T-cell (primary cell): ENCODE measurements at regions of chr10 and their contacts with region 1.

Region 1: GRCh38 chr10:69123747-69124562 is at the start of gene VPS26A:
- DNase-seq: peak; percentile 96 to 99 (median 98)
- ATAC-seq: peak; percentile 91 to 97 (median 94)
- H3K4me3 ChIP-seq: peak within 1 kb of the TSS; percentile 81 to 85
- H3K4me3 Mint-ChIP-seq: peak within 1 kb of the TSS; percentile 92 to 95 (median 92)
- H3K27ac ChIP-seq: peak within 1 kb of the TSS; percentile 96
- H3K27ac Mint-ChIP-seq: peak within 1 kb of the TSS; percentile 96 to 98
- H3K4me1 ChIP-seq: peaks cover 15 to 37% of the 10 kb centered on the region in 2 experiments
- H3K4me1 Mint-ChIP-seq: peaks cover 18 to 33% (median 32%) of the 10 kb centered on the region in 3 donors
- H3K27me3 ChIP-seq: no peaks in the 10 kb centered on the region
- H3K27me3 Mint-ChIP-seq: no peaks in the 10 kb centered on the region
- total RNA-seq, gene VPS26A: 24.6 to 35.8 (median 28.2) TPM

Region 2: GRCh38 chr10:68684413-68684812 is 439.5 kb before region 1 on chr10:
- CTCF ChIA-PET with region 1: no interaction called
- POLR2A ChIA-PET with region 1: no interaction called
- DNase-seq: peak in 3 of 35 experiments; percentile 3 to 50 (median 3)
- ATAC-seq: peak in 1 of 4 experiments; percentile 40
- H3K4me3 ChIP-seq: peak overlapping the region in 1 of 2 donors; percentile 22
- H3K4me3 Mint-ChIP-seq: peak overlapping the region in 2 of 3 donors; percentile 51 to 53
- H3K27ac ChIP-seq: peak overlapping the region; percentile 31
- H3K27ac Mint-ChIP-seq: peak overlapping the region; percentile 16 to 61
- H3K4me1 ChIP-seq: no peaks in the 10 kb centered on the region
- H3K4me1 Mint-ChIP-seq: peaks cover 0 to 2% (median 2%) of the 10 kb centered on the region in 3 donors
- H3K27me3 ChIP-seq: no peaks in the 10 kb centered on the region
- H3K27me3 Mint-ChIP-seq: no peaks in the 10 kb centered on the region

Region 3: GRCh38 chr10:69004821-69005220 is 119.1 kb before region 1 on chr10:
- CTCF ChIA-PET with region 1: interaction called, 5 to 13 read pairs
- POLR2A ChIA-PET with region 1: interaction called, 3 to 6 read pairs
- DNase-seq: peak in 3 of 35 experiments; percentile 16 to 68 (median 26)
- ATAC-seq: peak; percentile 59 to 73 (median 60)
- H3K4me3 ChIP-seq: no peak overlapping the region
- H3K4me3 Mint-ChIP-seq: no peak overlapping the region
- H3K27ac ChIP-seq: no peak overlapping the region
- H3K27ac Mint-ChIP-seq: no peak overlapping the region
- H3K4me1 ChIP-seq: no peaks in the 10 kb centered on the region
- H3K4me1 Mint-ChIP-seq: peaks cover 0 to 3% (median 2%) of the 10 kb centered on the region in 3 donors
- H3K27me3 ChIP-seq: no peaks in the 10 kb centered on the region
- H3K27me3 Mint-ChIP-seq: no peaks in the 10 kb centered on the region

Region 4: DNA sequence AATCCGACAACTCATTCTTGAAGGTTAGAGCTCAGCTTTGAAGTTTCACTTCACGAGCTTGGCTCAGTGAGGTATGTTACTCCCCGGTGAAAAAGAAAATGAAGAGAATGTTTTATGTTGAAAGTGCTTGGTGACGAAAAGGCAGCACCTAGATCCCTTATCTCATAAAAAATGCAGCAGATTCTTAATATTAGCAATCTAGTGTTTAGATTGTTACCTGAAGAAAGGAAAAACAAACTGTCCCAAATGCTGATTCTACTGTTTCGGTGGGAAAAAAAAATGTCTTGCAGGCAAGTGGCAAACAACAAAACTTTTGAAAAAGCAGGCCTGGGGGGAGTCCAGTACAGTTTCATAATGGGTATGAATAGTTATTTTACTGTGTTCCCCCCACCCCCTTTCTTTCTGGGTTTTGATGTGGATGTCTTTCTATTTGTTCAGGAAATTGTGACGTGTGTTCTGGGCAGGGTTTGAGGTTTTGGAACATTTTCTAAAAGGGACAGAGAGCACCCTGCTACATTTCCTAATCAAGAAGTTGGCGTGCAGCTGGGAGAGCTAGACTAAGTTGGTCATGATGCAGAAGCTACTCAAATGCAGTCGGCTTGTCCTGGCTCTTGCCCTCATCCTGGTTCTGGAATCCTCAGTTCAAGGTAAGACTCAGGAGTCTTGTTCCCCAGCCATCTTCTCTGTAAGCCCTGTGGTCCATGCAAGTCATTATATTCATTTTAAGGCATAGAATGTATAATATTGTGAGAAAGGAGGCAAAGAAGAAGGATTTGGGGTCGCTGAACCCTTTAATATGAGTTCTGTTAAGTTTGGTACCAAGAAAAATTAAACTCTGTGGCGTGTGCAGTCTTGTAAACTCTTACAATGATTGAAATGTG is 36.1 kb before region 1 on chr10 and contains the start of gene SRGN:
- CTCF ChIA-PET with region 1: interaction called, 4 to 5 read pairs
- POLR2A ChIA-PET with region 1: interaction called, 5 to 11 read pairs
- DNase-seq: peak; percentile 21 to 93 (median 80)
- ATAC-seq: peak; percentile 69 to 80 (median 76)
- H3K4me3 ChIP-seq: peak within 1 kb of the TSS; percentile 59 to 86
- H3K4me3 Mint-ChIP-seq: peak within 1 kb of the TSS; percentile 79 to 92 (median 86)
- H3K27ac ChIP-seq: peak within 1 kb of the TSS; percentile 98
- H3K27ac Mint-ChIP-seq: peak within 1 kb of the TSS; percentile 95 to 96
- H3K4me1 ChIP-seq: peaks cover 39 to 47% of the 10 kb centered on the region in 2 experiments
- H3K4me1 Mint-ChIP-seq: peaks cover 56 to 61% (median 60%) of the 10 kb centered on the region in 3 donors
- H3K27me3 ChIP-seq: no peaks in the 10 kb centered on the region
- H3K27me3 Mint-ChIP-seq: no peaks in the 10 kb centered on the region
- total RNA-seq, gene SRGN: 91.4 to 271 (median 137) TPM

Region 5: DNA sequence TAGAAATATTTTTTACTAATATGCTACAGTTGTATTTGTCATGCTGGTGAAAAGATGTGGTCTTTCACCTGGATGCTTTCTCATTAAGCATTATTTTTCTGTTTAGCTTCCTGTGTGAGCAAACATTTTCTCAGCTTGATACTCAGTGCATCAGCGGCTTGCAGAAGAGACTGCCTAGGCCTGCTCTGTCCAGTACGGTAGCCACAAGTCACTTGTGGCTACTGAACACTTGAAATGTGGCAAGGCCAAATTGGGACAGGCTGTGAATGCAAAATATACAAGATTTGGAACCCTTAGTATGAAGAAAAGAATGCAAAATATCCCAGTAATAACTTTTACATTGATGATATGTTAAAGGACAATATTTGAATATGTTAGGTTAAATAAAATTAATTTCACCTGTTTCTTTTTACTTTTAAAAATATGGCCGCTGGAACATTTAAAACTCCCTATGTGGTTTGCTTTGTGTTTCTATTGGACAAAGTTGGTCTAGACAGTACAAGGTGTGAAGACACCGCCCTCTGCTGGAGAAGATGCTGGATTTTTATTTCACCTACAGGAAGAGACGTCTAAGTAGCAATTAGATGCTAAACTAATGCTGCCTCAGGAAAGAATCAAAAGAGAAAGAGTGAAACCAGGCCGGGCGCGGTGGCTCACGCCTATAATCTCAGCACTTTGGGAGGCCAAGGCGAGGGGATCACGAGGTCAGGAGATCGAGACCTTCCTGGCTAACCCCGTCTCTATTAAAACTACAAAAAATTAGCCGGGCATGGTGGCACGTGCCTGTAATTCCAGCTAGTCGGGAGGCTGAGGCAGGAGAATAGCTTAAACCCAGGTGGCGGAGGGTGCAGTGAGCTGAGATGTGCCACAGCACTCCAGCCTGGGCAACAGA is 30.8 kb before region 1 on chr10:
- CTCF ChIA-PET with region 1: interaction called, 4 to 5 read pairs
- POLR2A ChIA-PET with region 1: interaction called, 11 to 12 read pairs
- DNase-seq: peak; percentile 49 to 94 (median 79)
- ATAC-seq: peak; percentile 38 to 73 (median 64)
- H3K4me3 ChIP-seq: no peak overlapping the region
- H3K4me3 Mint-ChIP-seq: peak overlapping the region; percentile 17 to 59 (median 46)
- H3K27ac ChIP-seq: peak overlapping the region; percentile 98
- H3K27ac Mint-ChIP-seq: peak overlapping the region; percentile 88
- H3K4me1 ChIP-seq: peaks cover 31 to 57% of the 10 kb centered on the region in 2 experiments
- H3K4me1 Mint-ChIP-seq: peaks cover 47 to 69% (median 64%) of the 10 kb centered on the region in 3 donors
- H3K27me3 ChIP-seq: no peaks in the 10 kb centered on the region
- H3K27me3 Mint-ChIP-seq: no peaks in the 10 kb centered on the region

Region 6: DNA sequence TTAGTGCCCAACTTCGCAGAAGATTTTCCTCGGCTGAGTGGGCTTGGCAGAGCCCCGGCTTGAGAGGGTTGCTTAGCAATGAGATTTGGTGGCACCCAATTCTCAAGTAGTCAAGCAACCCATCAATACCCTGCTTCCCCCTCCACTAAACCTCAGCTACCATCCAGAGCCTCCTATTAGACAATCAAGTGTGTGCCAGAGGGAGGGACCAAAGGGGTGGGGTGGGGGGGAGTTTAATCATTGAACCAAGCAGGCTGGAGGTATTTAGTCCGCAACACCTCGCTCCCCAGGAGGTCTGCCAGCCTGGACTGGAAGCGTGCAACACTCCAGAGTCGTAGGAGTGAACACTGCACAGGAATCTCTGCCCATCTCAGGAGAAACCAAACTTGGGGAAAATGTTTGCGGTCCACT is 96.1 kb after region 1 on chr10 and contains the start of gene HKDC1:
- CTCF ChIA-PET with region 1: no interaction called
- POLR2A ChIA-PET with region 1: interaction called in 1 of 2 experiments, 10 read pairs
- DNase-seq: no peak
- ATAC-seq: no peak
- H3K4me3 ChIP-seq: no peak within 1 kb of the TSS
- H3K4me3 Mint-ChIP-seq: no peak within 1 kb of the TSS
- H3K27ac ChIP-seq: no peak within 1 kb of the TSS
- H3K27ac Mint-ChIP-seq: peak within 1 kb of the TSS in 1 of 2 donors; percentile 70
- H3K4me1 ChIP-seq: peaks cover 6 to 36% of the 10 kb centered on the region in 2 experiments
- H3K4me1 Mint-ChIP-seq: peaks cover 36 to 40% (median 36%) of the 10 kb centered on the region in 3 donors
- H3K27me3 ChIP-seq: no peaks in the 10 kb centered on the region
- H3K27me3 Mint-ChIP-seq: no peaks in the 10 kb centered on the region
- total RNA-seq, gene HKDC1: 2.3 to 6.5 (median 5.2) TPM

Region 7: DNA sequence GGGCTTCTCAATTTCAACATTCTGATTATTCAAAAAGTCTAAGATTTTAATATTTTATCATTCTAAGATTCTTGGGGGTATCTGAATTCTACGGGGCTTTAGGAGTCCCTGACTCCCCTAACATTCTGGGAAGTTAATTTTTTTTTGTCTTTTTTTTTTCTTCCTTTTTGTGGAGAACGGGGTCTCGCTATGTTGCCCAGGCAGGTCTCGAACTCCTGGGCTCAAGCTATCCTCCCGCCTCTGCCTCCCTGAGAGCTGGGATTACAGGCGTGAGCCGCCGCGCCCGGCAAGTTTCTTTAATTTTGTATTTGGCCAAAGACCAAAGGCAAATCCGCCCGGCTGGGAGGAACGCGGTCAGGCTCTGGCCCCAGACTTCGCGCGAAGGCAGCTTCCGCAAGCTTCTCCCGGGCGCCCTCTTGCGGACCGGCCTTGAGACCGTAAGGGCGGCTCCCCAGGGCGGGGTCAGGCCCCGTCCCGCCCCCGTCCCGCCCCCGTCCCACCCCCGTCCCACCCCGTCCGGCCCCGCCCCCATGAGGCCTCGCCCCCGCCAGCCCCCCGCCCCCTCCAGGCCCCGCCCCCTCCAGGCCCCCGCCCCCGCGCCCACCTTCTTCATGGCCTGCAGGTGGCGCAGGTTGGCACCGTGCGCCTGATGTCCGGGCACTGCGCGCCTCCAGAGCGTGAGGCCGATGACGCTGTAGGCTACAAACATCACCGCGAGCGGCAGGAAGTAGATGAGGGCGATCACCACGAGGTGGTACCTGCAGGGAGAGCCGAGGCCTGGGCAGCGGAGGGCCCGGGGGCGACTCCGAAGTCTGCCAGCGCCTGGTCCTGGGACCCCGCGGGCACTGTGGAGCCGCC is 284.6 kb after region 1 on chr10:
- CTCF ChIA-PET with region 1: interaction called in 1 of 2 experiments, 5 read pairs
- POLR2A ChIA-PET with region 1: interaction called in 1 of 2 experiments, 17 read pairs
- DNase-seq: peak; percentile 81 to 96 (median 87)
- ATAC-seq: peak; percentile 91 to 95 (median 94)
- H3K4me3 ChIP-seq: peak overlapping the region in 1 of 2 donors; percentile 17
- H3K4me3 Mint-ChIP-seq: peak overlapping the region; percentile 49 to 73 (median 54)
- H3K27ac ChIP-seq: peak overlapping the region; percentile 82
- H3K27ac Mint-ChIP-seq: peak overlapping the region; percentile 81 to 86
- H3K4me1 ChIP-seq: peaks cover 3 to 24% of the 10 kb centered on the region in 2 experiments
- H3K4me1 Mint-ChIP-seq: peaks cover 21 to 25% (median 25%) of the 10 kb centered on the region in 3 donors
- H3K27me3 ChIP-seq: peaks cover 0 to 5% of the 10 kb centered on the region in 2 experiments
- H3K27me3 Mint-ChIP-seq: no peaks in the 10 kb centered on the region

Region 8: GRCh38 chr10:69558559-69558958 is 434.6 kb after region 1 on chr10:
- CTCF ChIA-PET with region 1: no interaction called
- POLR2A ChIA-PET with region 1: no interaction called
- DNase-seq: peak in 7 of 35 experiments; percentile 8 to 34 (median 15)
- ATAC-seq: peak; percentile 52 to 85 (median 74)
- H3K4me3 ChIP-seq: no peak overlapping the region
- H3K4me3 Mint-ChIP-seq: peak overlapping the region in 1 of 3 donors; percentile 10
- H3K27ac ChIP-seq: no peak overlapping the region
- H3K27ac Mint-ChIP-seq: no peak overlapping the region
- H3K4me1 ChIP-seq: peaks cover 2 to 14% of the 10 kb centered on the region in 2 experiments
- H3K4me1 Mint-ChIP-seq: peaks cover 15 to 18% (median 18%) of the 10 kb centered on the region in 3 donors
- H3K27me3 ChIP-seq: peaks cover 4 to 9% of the 10 kb centered on the region in 2 experiments
- H3K27me3 Mint-ChIP-seq: peaks cover 8% of the 10 kb centered on the region in 2 donors